OCI-LY7 (cell line): ENCODE measurements at regions of chr3 and their contacts with region 1.

Region 1: DNA sequence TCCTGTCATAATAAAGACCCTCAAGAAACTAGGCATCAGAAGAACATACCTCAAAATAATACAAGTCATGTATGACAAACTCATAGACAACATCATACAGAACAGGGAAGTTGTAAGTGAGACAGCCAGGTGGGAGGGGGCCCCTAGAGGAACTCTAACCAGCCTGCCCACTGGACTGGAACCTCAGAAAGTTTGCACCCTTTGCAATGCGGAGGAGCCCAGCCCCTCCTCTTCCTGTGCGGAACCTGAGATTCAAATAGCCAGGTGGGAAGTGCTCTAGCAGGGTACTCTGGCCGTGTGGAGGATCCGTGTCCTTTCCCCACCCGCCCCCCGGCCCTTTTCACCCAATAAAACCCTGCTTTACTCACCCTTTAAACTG is 387.0 kb upstream of the CBLB start:
- DNase-seq: peak; percentile 97
- H3K4me3 ChIP-seq: peak overlapping the region; percentile 97
- H3K27ac ChIP-seq: peak overlapping the region; percentile 97
- H3K4me1 ChIP-seq: peaks cover 28% of the 10 kb centered on the region
- CTCF ChIP-seq: no peak

Region 2: GRCh38 chr3:104521606-104522336 is 1734.1 kb before region 1 on chr3:
- CTCF ChIA-PET with region 1: no interaction called
- POLR2A ChIA-PET with region 1: no interaction called
- intact Hi-C with region 1: loop called (anchors 10 kb)
- DNase-seq: peak; percentile 79
- H3K4me3 ChIP-seq: peak overlapping the region; percentile 67
- H3K27ac ChIP-seq: peak overlapping the region; percentile 96
- H3K4me1 ChIP-seq: peaks cover 86% of the 10 kb centered on the region
- CTCF ChIP-seq: no peak

Region 3: DNA sequence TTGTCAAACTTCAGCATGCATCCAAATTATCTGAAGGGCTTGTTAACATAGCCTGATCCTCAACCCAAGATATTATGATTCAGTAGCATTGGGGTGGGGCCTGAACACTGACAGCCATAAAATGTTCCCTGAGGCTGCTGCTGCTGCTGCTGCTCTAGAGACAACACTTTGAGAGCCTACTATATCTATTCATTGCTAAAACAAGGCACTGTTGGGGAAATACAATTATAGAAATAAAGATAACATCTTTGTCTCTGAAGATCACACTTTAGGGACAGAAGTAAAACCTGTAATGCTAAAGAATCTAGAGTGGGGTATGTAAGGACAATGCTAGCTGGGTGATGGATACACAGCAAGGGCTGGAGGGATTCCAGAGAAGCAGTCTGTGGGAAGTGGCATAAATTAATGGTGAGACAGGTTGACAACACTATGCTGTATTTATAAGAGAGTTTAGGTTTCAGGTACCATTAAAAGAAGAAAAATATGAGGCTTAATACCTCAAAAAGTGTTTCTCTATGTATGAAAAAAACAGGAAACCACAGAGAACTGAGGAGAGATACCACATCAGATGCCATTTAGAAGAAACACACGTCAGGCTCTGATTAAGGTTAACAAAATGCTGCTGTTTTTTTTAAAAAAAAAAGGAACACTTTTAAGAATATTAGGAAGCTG is 503.0 kb before region 1 on chr3:
- CTCF ChIA-PET with region 1: no interaction called
- POLR2A ChIA-PET with region 1: no interaction called
- intact Hi-C with region 1: loop called (anchors 5 kb)
- DNase-seq: peak; percentile 26
- H3K4me3 ChIP-seq: peak overlapping the region; percentile 9
- H3K27ac ChIP-seq: peak overlapping the region; percentile 64
- H3K4me1 ChIP-seq: peaks cover 31% of the 10 kb centered on the region
- CTCF ChIP-seq: no peak

Region 4: GRCh38 chr3:105836533-105836932 is 419.3 kb before region 1 on chr3:
- CTCF ChIA-PET with region 1: no interaction called
- POLR2A ChIA-PET with region 1: interaction called, 4 read pairs
- intact Hi-C with region 1: loop called (anchors 10 kb)
- DNase-seq: peak; percentile 71
- H3K4me3 ChIP-seq: peak overlapping the region; percentile 65
- H3K27ac ChIP-seq: peak overlapping the region; percentile 77
- H3K4me1 ChIP-seq: peaks cover 77% of the 10 kb centered on the region
- CTCF ChIP-seq: peak; percentile 61

Region 5: DNA sequence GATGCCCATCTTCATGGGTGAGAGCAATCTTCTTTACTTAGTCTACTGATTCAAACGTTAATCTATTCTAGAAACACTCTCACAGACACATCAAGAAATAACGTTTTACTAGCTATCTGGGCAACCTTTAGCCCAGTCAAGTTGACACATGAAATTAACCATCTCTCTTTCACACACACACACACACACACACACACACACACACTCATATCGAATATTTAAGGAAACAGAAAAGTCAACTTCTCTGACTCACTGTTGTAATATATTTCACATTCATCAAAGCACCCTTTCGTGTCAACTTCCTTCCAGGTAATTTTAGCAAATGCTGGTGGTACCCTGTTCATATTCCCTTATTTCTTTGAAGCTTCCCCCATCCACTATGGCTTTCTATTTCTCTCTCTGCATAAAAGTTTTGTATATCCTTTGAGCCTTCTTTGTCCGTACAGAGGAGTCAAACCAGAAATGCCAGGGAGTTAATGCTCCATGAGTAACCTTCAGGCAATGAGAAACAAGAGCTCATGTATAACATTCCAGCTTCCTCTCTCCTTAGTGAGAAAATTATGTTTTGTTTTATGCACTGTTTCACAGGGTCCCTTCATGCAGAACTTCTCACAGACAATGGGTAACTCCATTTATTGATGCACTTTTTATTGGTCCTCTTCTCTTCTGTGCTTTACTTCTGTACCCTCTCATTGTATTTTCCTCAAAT is 51.5 kb before region 1 on chr3:
- CTCF ChIA-PET with region 1: no interaction called
- POLR2A ChIA-PET with region 1: no interaction called
- intact Hi-C with region 1: no loop called
- DNase-seq: no peak
- H3K4me3 ChIP-seq: no peak overlapping the region
- H3K27ac ChIP-seq: no peak overlapping the region
- H3K4me1 ChIP-seq: peaks cover 14% of the 10 kb centered on the region
- CTCF ChIP-seq: no peak

Region 6: GRCh38 chr3:106302451-106303221 is 46.8 kb after region 1 on chr3:
- CTCF ChIA-PET with region 1: no interaction called
- POLR2A ChIA-PET with region 1: no interaction called
- intact Hi-C with region 1: loop called (anchors 1 kb)
- DNase-seq: peak; percentile 84
- H3K4me3 ChIP-seq: no peak overlapping the region
- H3K27ac ChIP-seq: peak overlapping the region; percentile 38
- H3K4me1 ChIP-seq: peaks cover 26% of the 10 kb centered on the region
- CTCF ChIP-seq: no peak

Region 7: DNA sequence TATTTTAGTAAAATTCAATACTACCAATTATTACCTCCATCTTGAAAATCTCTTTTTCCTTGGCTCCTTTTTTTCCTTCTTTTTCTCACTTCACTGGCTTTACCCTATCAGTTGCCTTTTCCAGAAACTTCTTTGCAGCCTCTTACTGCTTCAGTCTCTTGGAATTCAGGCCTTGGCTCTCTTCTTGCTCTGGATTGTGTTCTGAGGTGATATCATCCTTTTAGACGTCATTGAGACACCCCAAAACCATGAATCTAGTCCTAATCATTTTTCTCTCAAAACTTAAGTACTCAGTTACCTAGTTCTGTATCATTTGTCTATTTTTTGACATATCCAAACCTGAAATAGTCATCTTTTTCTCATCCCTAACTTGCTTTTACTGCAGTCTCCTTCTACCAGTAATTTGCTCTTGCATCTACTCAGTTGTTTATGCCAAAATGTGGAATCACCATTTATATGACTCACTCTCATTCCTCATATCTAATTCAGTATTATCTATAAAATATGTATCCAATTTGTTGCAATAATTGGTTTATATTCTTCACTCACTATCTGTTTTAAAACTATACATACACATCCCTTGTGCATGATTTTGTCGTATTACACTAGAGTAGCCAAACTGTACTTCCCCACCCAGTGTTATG is 418.2 kb after region 1 on chr3:
- CTCF ChIA-PET with region 1: no interaction called
- POLR2A ChIA-PET with region 1: no interaction called
- intact Hi-C with region 1: no loop called
- DNase-seq: no peak
- H3K4me3 ChIP-seq: no peak overlapping the region
- H3K27ac ChIP-seq: no peak overlapping the region
- H3K4me1 ChIP-seq: no peaks in the 10 kb centered on the region
- CTCF ChIP-seq: no peak

Region 8: GRCh38 chr3:108124337-108125152 is 1868.7 kb after region 1 on chr3:
- CTCF ChIA-PET with region 1: interaction called, 3 read pairs
- POLR2A ChIA-PET with region 1: no interaction called
- intact Hi-C with region 1: loop called (anchors 10 kb)
- DNase-seq: peak; percentile 94
- H3K4me3 ChIP-seq: peak overlapping the region; percentile 81
- H3K27ac ChIP-seq: peak overlapping the region; percentile 95
- H3K4me1 ChIP-seq: peaks cover 62% of the 10 kb centered on the region
- CTCF ChIP-seq: 0 out of 2 replicates have a peak, but pooled peaks have one; percentile 1